Mammary epithelial cell (primary cell): ENCODE measurements at regions of chr6 and their contacts with region 1.

Region 1: GRCh38 chr6:42745707-42746462 is at the start of gene TBCC:
- DNase-seq: peak; percentile 98
- H3K4me3 ChIP-seq: peak within 1 kb of the TSS; percentile 79 to 96 (median 95)
- H3K27ac ChIP-seq: peak within 1 kb of the TSS; percentile 88
- H3K4me1 ChIP-seq: peaks cover 11% of the 10 kb centered on the region
- H3K27me3 ChIP-seq: no peaks in the 10 kb centered on the region
- CTCF ChIP-seq: no peak
- total RNA-seq, gene TBCC: 13.5 to 27.8 TPM

Region 2: GRCh38 chr6:42563697-42564505 is 182.0 kb before region 1 on chr6 and contains the start of gene UBR2:
- CTCF ChIA-PET with region 1: no interaction called
- dilution Hi-C with region 1: no loop called
- in situ Hi-C with region 1: no loop called
- intact Hi-C with region 1: loop called (anchors 10 kb)
- DNase-seq: peak; percentile 98
- H3K4me3 ChIP-seq: peak within 1 kb of the TSS; percentile 78 to 84 (median 83)
- H3K27ac ChIP-seq: peak within 1 kb of the TSS; percentile 79
- H3K4me1 ChIP-seq: peaks cover 4% of the 10 kb centered on the region
- H3K27me3 ChIP-seq: no peaks in the 10 kb centered on the region
- CTCF ChIP-seq: peak in 1 of 2 donors; percentile 39
- total RNA-seq, gene UBR2: 23.8 to 31.3 TPM

Region 3: DNA sequence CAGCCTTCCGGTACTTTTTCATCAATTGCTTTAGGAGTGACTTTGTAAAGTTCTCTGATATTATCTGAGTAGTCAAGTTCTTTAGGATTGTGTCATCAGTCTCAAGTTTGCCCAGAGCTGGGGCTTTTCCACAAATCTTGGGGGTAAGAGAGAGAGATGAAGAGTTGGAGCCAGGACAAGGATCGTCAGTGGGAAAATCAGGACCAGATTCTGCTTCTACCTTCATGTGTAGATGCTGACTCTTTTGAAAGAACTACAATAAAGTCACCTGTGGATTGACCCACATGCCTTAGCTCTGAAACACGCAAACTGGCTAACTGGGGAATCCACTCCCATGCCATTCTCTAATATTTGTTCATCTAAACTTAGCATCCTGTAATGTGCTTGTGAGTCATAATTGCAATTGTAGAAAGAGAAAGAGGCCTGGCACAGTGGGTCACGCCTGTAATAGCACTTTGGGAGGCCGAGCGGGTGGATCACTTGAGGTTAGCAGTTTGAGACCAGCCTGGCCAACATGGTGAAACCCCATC is 20.3 kb after region 1 on chr6:
- CTCF ChIA-PET with region 1: no interaction called
- dilution Hi-C with region 1: no loop called
- in situ Hi-C with region 1: no loop called
- intact Hi-C with region 1: loop called (anchors 2 kb)
- DNase-seq: peak; percentile 76
- H3K4me3 ChIP-seq: no peak overlapping the region
- H3K27ac ChIP-seq: no peak overlapping the region
- H3K4me1 ChIP-seq: no peaks in the 10 kb centered on the region
- H3K27me3 ChIP-seq: no peaks in the 10 kb centered on the region
- CTCF ChIP-seq: no peak

Region 4: GRCh38 chr6:42782622-42783176 is 36.8 kb after region 1 on chr6:
- CTCF ChIA-PET with region 1: no interaction called
- dilution Hi-C with region 1: no loop called
- in situ Hi-C with region 1: loop called in 1 of 2 experiments (anchors 5 kb)
- intact Hi-C with region 1: loop called (anchors 1 kb)
- DNase-seq: peak; percentile 78
- H3K4me3 ChIP-seq: peak overlapping the region; percentile 69 to 96 (median 93)
- H3K27ac ChIP-seq: peak overlapping the region; percentile 95
- H3K4me1 ChIP-seq: peaks cover 6% of the 10 kb centered on the region
- H3K27me3 ChIP-seq: no peaks in the 10 kb centered on the region
- CTCF ChIP-seq: no peak

Region 5: DNA sequence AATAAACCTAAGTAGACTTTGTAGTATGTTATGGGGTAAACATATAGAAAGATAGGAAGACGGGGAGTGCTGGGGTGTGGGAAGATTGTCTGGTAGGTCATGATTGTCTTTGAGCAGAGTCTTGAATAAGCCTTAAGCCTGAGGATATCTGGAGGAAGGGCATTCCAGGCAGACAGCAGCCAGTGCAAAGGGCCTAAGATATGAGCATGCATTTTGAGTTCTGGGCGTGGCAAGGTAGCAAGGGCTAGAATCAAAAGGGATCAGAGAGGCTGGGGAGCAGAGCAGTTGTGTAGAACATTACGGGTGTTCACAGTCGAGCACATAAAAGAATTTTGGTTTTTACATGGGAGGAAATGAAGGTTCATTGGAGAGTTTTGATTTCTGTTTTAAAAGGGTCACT is 50.3 kb after region 1 on chr6:
- CTCF ChIA-PET with region 1: no interaction called
- dilution Hi-C with region 1: no loop called
- in situ Hi-C with region 1: no loop called
- intact Hi-C with region 1: loop called (anchors 5 kb)
- DNase-seq: no peak
- H3K4me3 ChIP-seq: no peak overlapping the region
- H3K27ac ChIP-seq: no peak overlapping the region
- H3K4me1 ChIP-seq: peaks cover 27% of the 10 kb centered on the region
- H3K27me3 ChIP-seq: no peaks in the 10 kb centered on the region
- CTCF ChIP-seq: no peak

Region 6: GRCh38 chr6:42841844-42842584 is 96.1 kb after region 1 on chr6:
- CTCF ChIA-PET with region 1: no interaction called
- dilution Hi-C with region 1: no loop called
- in situ Hi-C with region 1: no loop called
- intact Hi-C with region 1: no loop called
- DNase-seq: no peak
- H3K4me3 ChIP-seq: no peak overlapping the region
- H3K27ac ChIP-seq: no peak overlapping the region
- H3K4me1 ChIP-seq: no peaks in the 10 kb centered on the region
- H3K27me3 ChIP-seq: no peaks in the 10 kb centered on the region
- CTCF ChIP-seq: no peak

Region 7: DNA sequence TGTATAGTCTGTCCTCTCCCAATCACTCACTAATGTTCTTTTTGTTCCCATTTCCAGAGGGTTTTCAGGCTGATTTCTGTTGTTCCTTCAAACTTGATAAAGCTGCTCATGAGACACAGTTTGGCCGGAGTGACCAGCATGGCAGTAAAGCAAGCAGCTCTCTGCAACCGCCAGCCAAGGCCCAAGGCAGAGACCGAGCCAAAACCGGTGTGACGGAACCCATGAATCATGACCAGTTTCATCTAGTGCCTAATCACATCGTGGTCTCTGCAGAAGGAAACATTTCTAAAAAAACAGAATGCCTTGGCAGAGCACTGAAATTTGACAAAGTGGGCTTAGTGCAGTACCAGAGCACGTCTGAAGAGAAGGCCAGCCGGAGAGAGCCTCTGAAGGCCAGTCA is 118.7 kb after region 1 on chr6:
- CTCF ChIA-PET with region 1: no interaction called
- dilution Hi-C with region 1: no loop called
- in situ Hi-C with region 1: loop called in 1 of 2 experiments (anchors 25 kb)
- intact Hi-C with region 1: no loop called
- DNase-seq: no peak
- H3K4me3 ChIP-seq: no peak overlapping the region
- H3K27ac ChIP-seq: no peak overlapping the region
- H3K4me1 ChIP-seq: no peaks in the 10 kb centered on the region
- H3K27me3 ChIP-seq: no peaks in the 10 kb centered on the region
- CTCF ChIP-seq: no peak

Region 8: DNA sequence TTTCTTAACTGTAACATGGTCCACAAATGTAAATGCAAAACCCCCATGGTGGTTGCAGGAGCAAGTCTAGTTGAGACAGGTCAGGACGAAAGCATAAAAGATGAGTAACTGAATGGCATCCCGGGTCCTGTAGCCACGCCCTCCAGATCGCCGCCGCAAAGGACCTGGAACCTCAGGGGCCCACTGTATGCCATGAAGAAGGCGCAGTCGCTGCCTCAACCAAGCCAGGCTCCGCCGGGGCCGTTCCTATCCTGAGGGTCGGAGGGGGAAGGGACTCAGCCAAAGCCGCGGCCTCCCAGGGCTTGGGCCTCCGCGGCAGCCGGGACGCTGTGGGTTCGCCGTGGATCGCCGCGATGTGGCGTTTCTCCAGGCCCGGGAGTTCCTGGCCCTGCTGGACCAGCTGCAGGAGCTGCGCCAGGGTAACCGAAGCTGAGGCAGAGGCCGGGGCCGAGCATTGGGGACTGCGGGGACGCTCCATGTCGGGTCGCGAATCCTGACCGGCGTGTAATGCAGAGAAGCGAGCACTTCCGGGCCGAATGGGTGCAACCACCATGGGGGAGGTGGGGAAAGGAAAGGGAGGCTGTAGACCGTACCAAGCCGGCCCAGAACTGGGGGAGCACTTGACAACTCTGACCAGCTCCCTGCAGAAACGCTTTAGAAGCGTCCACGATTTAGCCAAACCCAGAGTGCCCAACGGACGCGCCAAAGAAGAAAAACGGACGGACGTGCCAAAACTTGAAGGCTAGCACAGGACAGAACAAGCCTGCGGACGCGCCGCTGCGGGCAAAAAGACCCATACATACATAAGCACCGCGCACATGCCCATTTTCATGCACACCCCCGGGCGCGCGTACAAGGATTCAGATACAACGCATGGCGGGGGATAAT is 144.7 kb after region 1 on chr6:
- CTCF ChIA-PET with region 1: no interaction called
- dilution Hi-C with region 1: no loop called
- in situ Hi-C with region 1: no loop called
- intact Hi-C with region 1: no loop called
- DNase-seq: peak; percentile 98
- H3K4me3 ChIP-seq: peak overlapping the region; percentile 70 to 84 (median 78)
- H3K27ac ChIP-seq: peak overlapping the region; percentile 91
- H3K4me1 ChIP-seq: peaks cover 7% of the 10 kb centered on the region
- H3K27me3 ChIP-seq: no peaks in the 10 kb centered on the region
- CTCF ChIP-seq: no peak